Activated CD4-positive, alpha-beta T cell treated with anti-CD3 and anti-CD28 coated beads for 36 hours (primary cell): ENCODE measurements at regions of chr16 and their contacts with region 1.

Region 1: DNA sequence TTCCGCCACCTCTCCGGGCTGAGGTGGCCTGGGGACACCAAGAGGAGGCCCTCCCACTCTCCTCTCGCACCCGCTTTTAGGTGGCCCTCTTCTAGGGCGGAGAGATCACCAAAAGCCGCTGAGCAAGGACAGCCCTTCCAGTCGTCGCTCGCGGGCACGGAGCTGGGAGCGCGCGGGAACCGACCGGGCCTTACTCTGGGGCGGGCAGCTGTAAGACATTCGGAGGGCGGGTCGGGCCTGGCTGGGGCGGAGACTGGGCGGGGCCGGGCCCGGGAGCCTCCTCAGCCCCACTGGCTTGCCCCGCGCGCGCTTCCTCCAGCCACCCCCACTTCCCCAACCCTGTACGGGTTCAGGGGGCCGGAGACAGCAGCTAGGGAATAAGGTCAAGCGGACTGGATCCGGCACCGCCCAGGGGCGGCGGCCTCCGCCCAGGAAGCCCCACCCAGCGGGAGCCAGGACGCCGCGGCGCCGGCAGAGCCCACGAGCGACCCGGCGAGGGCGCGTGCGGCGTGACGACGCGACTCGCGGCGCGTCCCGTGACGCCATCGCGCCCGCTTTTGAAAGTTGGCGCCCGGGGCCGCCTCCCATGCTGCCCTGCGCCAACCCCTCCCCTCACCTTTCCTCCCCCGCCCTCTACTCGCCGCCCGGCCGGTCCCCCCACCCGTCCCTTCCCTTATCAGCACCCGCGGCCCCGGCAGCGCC is 351 bp upstream of the CTCF start:
- DNase-seq: peak; percentile 99
- ATAC-seq: peak; percentile 87
- H3K4me3 Mint-ChIP-seq: peak overlapping the region; percentile 84
- H3K27ac Mint-ChIP-seq: peak overlapping the region; percentile 85
- H3K4me1 Mint-ChIP-seq: peaks cover 41% of the 10 kb centered on the region
- H3K27me3 Mint-ChIP-seq: no peaks in the 10 kb centered on the region

Region 2: DNA sequence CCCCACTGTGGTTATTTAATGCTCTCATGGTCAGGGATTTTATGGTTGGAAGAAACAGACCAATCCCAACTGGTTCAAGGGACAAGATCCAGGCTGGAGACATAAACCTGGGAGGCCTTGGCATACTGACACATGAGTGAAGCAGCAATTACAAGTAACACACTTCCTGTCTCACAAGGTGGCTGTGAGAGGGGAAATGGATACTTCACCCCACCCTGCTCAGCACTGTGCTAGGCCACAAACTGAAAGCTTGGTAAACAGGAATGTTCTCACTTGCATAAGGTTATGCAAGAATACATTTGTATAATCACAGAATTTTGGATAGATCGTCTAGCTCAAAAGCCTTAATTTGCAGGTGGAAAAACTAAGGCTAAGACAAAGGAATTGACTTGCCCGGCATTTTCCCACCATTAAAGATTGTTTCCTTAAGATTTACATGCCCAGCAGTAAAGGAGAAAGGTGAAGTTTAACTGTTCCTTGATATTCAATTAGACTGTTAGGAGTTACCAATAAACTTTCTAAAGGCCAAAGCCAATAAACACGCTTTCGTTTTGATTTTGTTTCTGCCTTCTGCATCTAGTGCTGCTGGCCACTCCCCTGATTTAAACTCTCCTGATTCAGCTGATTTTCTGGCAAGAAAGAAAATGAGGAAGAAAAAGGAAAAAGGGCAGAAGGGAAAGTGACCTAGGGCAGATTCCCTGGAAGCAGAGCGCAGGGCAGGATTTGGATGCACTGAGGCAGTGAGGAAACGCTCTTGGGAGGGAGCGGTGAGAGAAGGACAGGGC is 1411.1 kb before region 1 on chr16:
- CTCF ChIA-PET with region 1: no interaction called
- POLR2A ChIA-PET with region 1: no interaction called
- intact Hi-C with region 1: no loop called
- DNase-seq: no peak
- ATAC-seq: no peak
- H3K4me3 Mint-ChIP-seq: no peak overlapping the region
- H3K27ac Mint-ChIP-seq: no peak overlapping the region
- H3K4me1 Mint-ChIP-seq: peaks cover 3% of the 10 kb centered on the region
- H3K27me3 Mint-ChIP-seq: no peaks in the 10 kb centered on the region

Region 3: GRCh38 chr16:67226804-67227557 is 335.0 kb before region 1 on chr16 and contains the start of gene TMEM208:
- CTCF ChIA-PET with region 1: no interaction called
- POLR2A ChIA-PET with region 1: no interaction called
- intact Hi-C with region 1: loop called in 1 of 2 experiments (anchors 1 kb)
- DNase-seq: peak; percentile 99
- ATAC-seq: peak; percentile 97
- H3K4me3 Mint-ChIP-seq: peak within 1 kb of the TSS; percentile 98
- H3K27ac Mint-ChIP-seq: peak within 1 kb of the TSS; percentile 98
- H3K4me1 Mint-ChIP-seq: peaks cover 42% of the 10 kb centered on the region
- H3K27me3 Mint-ChIP-seq: no peaks in the 10 kb centered on the region
- total RNA-seq, gene TMEM208: 13.6 to 31.2 TPM

Region 4: DNA sequence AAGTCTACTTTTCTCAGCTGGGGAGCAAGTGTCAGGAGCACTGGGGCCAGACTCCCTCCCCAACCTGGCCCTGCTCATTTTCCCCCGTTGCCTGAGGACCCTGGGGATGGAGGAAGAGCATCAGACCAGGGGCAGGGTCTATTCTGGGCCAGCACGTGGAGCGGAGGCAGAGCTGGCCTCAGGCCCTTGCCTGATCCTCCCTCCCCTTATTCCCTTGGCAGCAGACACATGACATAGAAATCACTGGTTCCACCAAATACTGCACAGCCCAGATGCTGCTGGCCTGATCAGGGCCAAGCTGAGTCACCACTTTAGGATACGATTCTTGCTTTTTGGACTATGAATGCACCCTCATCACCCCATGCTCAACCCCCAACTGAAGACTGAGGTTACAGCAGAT is 62.9 kb before region 1 on chr16:
- CTCF ChIA-PET with region 1: no interaction called
- POLR2A ChIA-PET with region 1: interaction called, 10 read pairs
- intact Hi-C with region 1: no loop called
- DNase-seq: no peak
- ATAC-seq: no peak
- H3K4me3 Mint-ChIP-seq: no peak overlapping the region
- H3K27ac Mint-ChIP-seq: no peak overlapping the region
- H3K4me1 Mint-ChIP-seq: peaks cover 9% of the 10 kb centered on the region
- H3K27me3 Mint-ChIP-seq: no peaks in the 10 kb centered on the region

Region 5: DNA sequence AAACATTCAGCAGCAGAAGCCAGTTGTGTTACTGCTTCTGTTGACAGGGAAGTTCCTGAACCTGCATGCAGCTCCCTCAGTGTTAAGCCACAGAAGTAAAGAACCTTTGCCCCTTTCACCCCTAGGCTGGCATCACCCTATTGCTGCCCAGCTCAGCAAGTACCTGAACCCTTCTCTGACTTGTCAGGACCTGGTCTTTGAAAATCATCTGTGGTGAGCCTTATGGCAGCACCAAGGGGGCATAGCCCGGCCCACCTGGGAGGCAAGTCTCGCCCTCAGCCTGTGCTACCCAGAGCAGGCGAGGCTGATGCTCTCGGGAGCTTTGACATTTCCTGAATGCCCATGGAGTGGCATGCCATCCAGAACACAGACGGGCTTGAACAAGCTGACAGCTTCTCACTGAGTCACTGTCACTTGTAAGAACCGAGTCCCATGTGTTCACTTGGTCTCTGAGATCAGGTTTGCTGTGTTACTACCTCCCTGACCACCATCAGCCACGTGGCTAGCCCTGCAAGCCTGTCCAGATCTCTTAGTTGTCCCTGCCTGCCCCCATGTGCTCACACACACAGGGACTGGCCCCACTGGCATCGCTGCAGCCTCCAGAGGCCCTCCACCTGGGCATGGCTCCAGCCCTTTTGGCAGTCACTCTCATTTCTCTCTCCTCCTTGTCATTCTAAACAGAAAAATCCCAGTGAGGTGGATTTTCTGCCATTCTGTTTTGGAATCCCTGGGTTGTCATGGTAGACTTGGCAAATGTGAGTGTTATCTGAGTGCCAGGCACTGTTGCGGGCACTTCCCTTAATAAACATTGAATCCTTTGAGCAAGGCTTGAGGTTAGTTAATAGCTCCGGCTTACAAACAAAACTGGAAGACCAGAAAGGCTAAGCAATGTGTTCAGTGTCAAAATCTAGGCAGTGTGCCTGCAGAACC is 80.1 kb after region 1 on chr16:
- CTCF ChIA-PET with region 1: interaction called, 32 read pairs
- POLR2A ChIA-PET with region 1: no interaction called
- intact Hi-C with region 1: loop called (anchors 1 kb)
- DNase-seq: no peak
- ATAC-seq: no peak
- H3K4me3 Mint-ChIP-seq: no peak overlapping the region
- H3K27ac Mint-ChIP-seq: no peak overlapping the region
- H3K4me1 Mint-ChIP-seq: peaks cover 12% of the 10 kb centered on the region
- H3K27me3 Mint-ChIP-seq: no peaks in the 10 kb centered on the region

Region 6: DNA sequence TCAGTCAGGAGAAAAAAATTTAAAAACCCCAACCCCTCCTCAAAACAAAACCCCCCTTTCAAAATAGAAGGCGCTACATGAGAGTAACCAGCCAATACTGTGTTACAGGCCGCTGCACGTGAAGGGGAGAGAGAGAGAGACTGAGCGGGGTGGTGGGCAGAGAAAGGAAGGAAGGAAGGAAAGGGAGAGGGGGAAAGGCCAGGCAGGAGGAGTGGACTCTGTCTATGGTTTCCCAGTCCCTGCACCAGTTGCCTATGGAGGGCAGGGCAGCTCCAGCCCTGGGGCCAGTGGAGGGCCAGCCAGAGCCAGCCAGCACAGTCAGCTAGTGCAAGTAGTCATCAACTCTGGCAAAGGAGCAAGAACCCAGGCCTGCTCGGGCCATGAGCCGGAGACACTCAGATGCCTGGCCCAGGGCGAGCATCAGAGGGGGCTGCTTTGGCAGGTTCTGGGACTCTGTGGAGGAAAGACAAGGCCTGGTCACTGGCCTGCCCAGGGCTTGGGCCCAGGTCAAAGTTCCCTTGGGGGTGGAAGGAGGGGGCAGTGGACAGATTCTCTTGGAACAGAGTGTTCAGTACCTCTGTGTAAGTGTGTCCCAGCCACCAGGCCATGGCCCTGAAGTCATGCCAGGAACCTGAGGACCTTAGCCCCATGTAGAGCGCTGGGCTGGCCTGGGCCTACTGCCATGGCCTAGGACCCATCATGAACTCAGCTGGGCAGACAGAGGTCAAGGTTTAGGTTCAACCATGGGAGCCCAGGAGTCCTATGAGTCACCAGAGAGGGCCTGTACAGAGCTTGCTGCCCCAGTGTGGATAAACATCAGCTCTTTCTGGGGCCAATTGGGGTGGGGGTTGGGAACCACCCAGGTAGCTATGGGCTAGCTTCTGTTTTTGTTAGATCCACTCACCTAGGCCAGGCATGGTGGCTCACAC is 164.4 kb after region 1 on chr16:
- CTCF ChIA-PET with region 1: no interaction called
- POLR2A ChIA-PET with region 1: no interaction called
- intact Hi-C with region 1: no loop called
- DNase-seq: no peak
- ATAC-seq: no peak
- H3K4me3 Mint-ChIP-seq: no peak overlapping the region
- H3K27ac Mint-ChIP-seq: no peak overlapping the region
- H3K4me1 Mint-ChIP-seq: no peaks in the 10 kb centered on the region
- H3K27me3 Mint-ChIP-seq: no peaks in the 10 kb centered on the region

Region 7: GRCh38 chr16:67806428-67807147 is 244.6 kb after region 1 on chr16 and contains the starts of genes RANBP10 and TSNAXIP1:
- CTCF ChIA-PET with region 1: no interaction called
- POLR2A ChIA-PET with region 1: interaction called, 6 read pairs
- intact Hi-C with region 1: loop called in 1 of 2 experiments (anchors 1 kb)
- DNase-seq: peak; percentile 98
- ATAC-seq: peak; percentile 96
- H3K4me3 Mint-ChIP-seq: peak within 1 kb of the TSS; percentile 91
- H3K27ac Mint-ChIP-seq: peak within 1 kb of the TSS; percentile 91
- H3K4me1 Mint-ChIP-seq: peaks cover 39% of the 10 kb centered on the region
- H3K27me3 Mint-ChIP-seq: no peaks in the 10 kb centered on the region
- total RNA-seq, gene RANBP10: 15.6 to 18.0 TPM
- total RNA-seq, gene TSNAXIP1: 0.62 to 1.1 TPM

Region 8: GRCh38 chr16:67968400-67969253 is 406.7 kb after region 1 on chr16 and contains the start of gene SLC12A4:
- CTCF ChIA-PET with region 1: no interaction called
- POLR2A ChIA-PET with region 1: no interaction called
- intact Hi-C with region 1: loop called in 1 of 2 experiments (anchors 1 kb)
- DNase-seq: peak; percentile 94
- ATAC-seq: peak; percentile 90
- H3K4me3 Mint-ChIP-seq: peak within 1 kb of the TSS; percentile 84
- H3K27ac Mint-ChIP-seq: peak within 1 kb of the TSS; percentile 80
- H3K4me1 Mint-ChIP-seq: peaks cover 14% of the 10 kb centered on the region
- H3K27me3 Mint-ChIP-seq: no peaks in the 10 kb centered on the region
- total RNA-seq, gene SLC12A4: 21.8 to 25.8 TPM